Common myeloid progenitor, CD34-positive (primary cell): ENCODE measurements at regions of chr16 and their contacts with region 1.

Region 1: GRCh38 chr16:85238233-85238647 is 126.0 kb upstream of the CIBAR2 start:
- DNase-seq: peak; percentile 23 to 76 (median 54)
- H3K4me3 ChIP-seq: peak overlapping the region in 1 of 7 experiments; percentile 48
- H3K27ac ChIP-seq: no peak overlapping the region
- H3K4me1 ChIP-seq: peaks cover 0 to 30% (median 22%) of the 10 kb centered on the region in 4 experiments
- H3K27me3 ChIP-seq: no peaks in the 10 kb centered on the region

Region 2: GRCh38 chr16:85253084-85253941 is 15.1 kb after region 1 on chr16:
- CTCF ChIA-PET with region 1: interaction called, 17 read pairs
- POLR2A ChIA-PET with region 1: interaction called, 3 read pairs
- DNase-seq: peak; percentile 57 to 86 (median 79)
- H3K4me3 ChIP-seq: no peak overlapping the region
- H3K27ac ChIP-seq: no peak overlapping the region
- H3K4me1 ChIP-seq: peaks cover 0 to 22% (median 15%) of the 10 kb centered on the region in 4 experiments
- H3K27me3 ChIP-seq: no peaks in the 10 kb centered on the region

Region 3: GRCh38 chr16:85305996-85306792 is 68.0 kb after region 1 on chr16:
- CTCF ChIA-PET with region 1: no interaction called
- POLR2A ChIA-PET with region 1: no interaction called
- DNase-seq: peak; percentile 90 to 96 (median 95)
- H3K4me3 ChIP-seq: no peak overlapping the region
- H3K27ac ChIP-seq: peak overlapping the region in 1 of 2 experiments; percentile 76
- H3K4me1 ChIP-seq: peaks cover 28 to 84% (median 83%) of the 10 kb centered on the region in 4 experiments
- H3K27me3 ChIP-seq: no peaks in the 10 kb centered on the region